ENCODE measurements at regions of chr5 and their contacts with region 1.

Region 1: DNA sequence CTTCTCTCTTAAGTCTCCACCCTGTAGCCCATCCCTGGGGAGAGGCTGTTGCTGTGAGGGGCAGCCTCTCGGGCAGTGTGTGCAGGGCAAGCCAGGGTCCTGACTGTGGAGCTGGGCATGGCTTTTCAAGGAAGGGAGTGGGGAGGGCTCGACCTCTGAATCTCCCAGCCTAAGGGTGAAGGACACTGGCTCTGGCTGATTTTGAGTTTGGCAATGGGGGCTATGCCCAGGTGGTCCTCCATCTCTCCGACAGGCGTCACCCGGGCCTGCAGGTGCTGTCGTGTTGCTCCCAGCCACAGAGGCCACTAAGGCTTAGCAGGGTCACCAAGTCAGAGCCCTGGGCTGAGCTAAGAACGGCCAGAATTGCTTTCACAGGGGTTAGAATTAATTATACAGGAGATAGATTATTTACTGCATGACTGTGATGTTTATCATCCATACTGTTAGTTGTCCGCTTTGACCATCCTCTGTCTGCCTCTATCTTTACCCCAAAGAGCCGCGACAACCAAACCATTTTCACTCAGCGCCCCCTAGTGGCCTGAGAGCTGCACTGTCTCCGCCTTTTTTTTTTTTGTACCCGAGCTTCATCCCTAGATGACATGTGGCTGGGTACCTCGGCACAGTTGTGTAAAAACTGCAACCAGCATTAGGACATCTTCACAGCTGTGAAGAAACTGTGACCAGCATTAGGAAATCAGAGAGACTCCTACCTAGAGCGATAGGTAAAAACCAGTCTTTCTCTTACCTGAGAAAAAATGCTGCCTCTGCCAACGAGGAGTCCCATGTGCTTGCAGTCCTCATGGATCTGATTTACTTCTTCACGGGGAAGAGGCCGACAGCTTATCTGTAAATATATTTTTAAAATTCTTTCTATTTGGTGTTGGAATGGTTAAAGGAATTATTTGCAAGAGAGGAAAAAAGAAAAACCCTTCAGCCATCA is 44.5 kb downstream of the AGXT2 start:
- DNase-seq: peak; percentile 77
- H3K4me3 ChIP-seq: no peak overlapping the region
- H3K27ac ChIP-seq: no peak overlapping the region
- H3K4me1 ChIP-seq: no peaks in the 10 kb centered on the region
- H3K27me3 ChIP-seq: peaks cover 3% of the 10 kb centered on the region
- CTCF ChIP-seq: peak; percentile 98

Region 2: GRCh38 chr5:34474573-34475021 is 528.7 kb before region 1 on chr5:
- CTCF ChIA-PET with region 1: interaction called, 4 read pairs
- POLR2A ChIA-PET with region 1: no interaction called
- intact Hi-C with region 1: loop called (anchors 5 kb)
- DNase-seq: peak; percentile 61
- H3K4me3 ChIP-seq: no peak overlapping the region
- H3K27ac ChIP-seq: no peak overlapping the region
- H3K4me1 ChIP-seq: no peaks in the 10 kb centered on the region
- H3K27me3 ChIP-seq: no peaks in the 10 kb centered on the region
- CTCF ChIP-seq: peak; percentile 90

Region 3: DNA sequence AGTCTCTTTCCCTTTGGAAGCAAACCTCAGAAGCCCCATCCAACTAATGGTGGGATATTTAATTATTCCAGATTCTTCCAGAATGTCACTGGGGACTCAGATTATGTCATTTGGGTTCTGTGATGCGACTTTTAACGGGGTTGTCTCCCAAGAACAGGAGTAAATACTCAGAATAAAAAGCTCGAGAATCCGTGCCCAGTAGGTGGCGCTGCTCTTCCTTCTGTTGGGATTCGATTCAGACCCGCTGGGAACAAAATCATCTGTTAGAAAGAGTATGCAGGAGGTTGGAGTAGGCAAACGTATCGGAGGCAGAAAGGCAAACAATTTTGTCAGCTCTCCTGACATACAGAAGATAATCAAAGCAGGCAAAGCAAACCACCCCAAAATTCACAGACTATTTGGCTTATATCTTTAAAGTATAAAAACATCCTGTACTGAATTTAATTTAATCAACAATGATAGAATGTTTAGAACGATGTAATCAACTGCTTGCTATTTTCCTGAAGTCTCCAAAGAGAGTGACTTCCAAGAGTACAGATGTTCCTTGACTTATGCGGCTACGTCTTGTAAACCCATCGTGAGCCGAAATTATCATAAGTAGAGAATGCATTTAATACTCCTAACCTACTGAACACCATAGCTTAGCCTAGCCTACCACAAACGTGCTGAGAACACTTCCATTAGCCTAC is 517.0 kb before region 1 on chr5:
- CTCF ChIA-PET with region 1: no interaction called
- POLR2A ChIA-PET with region 1: no interaction called
- intact Hi-C with region 1: loop called (anchors 5 kb)
- DNase-seq: peak; percentile 87
- H3K4me3 ChIP-seq: no peak overlapping the region
- H3K27ac ChIP-seq: no peak overlapping the region
- H3K4me1 ChIP-seq: peaks cover 7% of the 10 kb centered on the region
- H3K27me3 ChIP-seq: no peaks in the 10 kb centered on the region
- CTCF ChIP-seq: peak; percentile 94

Region 4: GRCh38 chr5:34957857-34958690 is 45.2 kb before region 1 on chr5:
- CTCF ChIA-PET with region 1: interaction called, 5 read pairs
- POLR2A ChIA-PET with region 1: no interaction called
- intact Hi-C with region 1: loop called (anchors 5 kb)
- DNase-seq: peak; percentile 41
- H3K4me3 ChIP-seq: no peak overlapping the region
- H3K27ac ChIP-seq: no peak overlapping the region
- H3K4me1 ChIP-seq: no peaks in the 10 kb centered on the region
- H3K27me3 ChIP-seq: no peaks in the 10 kb centered on the region
- CTCF ChIP-seq: peak; percentile 68

Region 5: GRCh38 chr5:35354751-35355150 is 351.5 kb after region 1 on chr5:
- CTCF ChIA-PET with region 1: no interaction called
- POLR2A ChIA-PET with region 1: no interaction called
- intact Hi-C with region 1: no loop called
- DNase-seq: no peak
- H3K4me3 ChIP-seq: no peak overlapping the region
- H3K27ac ChIP-seq: no peak overlapping the region
- H3K4me1 ChIP-seq: no peaks in the 10 kb centered on the region
- H3K27me3 ChIP-seq: no peaks in the 10 kb centered on the region
- CTCF ChIP-seq: no peak